ENCODE measurements at regions of chr6 and their contacts with region 1.

Region 1: GRCh38 chr6:20212392-20213217 is at the start of gene MBOAT1:
- DNase-seq: peak; percentile 60 to 76 (median 66)
- H3K4me3 ChIP-seq: peak within 1 kb of the TSS; percentile 59 to 89
- H3K4me3 Mint-ChIP-seq: peak within 1 kb of the TSS; percentile 97 to 99 (median 98)
- H3K27ac ChIP-seq: peak within 1 kb of the TSS; percentile 56
- H3K27ac Mint-ChIP-seq: peak within 1 kb of the TSS; percentile 93 to 96 (median 96)
- H3K4me1 ChIP-seq: peaks cover 43% of the 10 kb centered on the region
- H3K4me1 Mint-ChIP-seq: peaks cover 30 to 59% (median 37%) of the 10 kb centered on the region in 4 donors
- H3K27me3 ChIP-seq: no peaks in the 10 kb centered on the region
- H3K27me3 Mint-ChIP-seq: no peaks in the 10 kb centered on the region
- total RNA-seq, gene MBOAT1: 21.3 to 24.6 TPM

Region 2: GRCh38 chr6:20126789-20127653 is 85.6 kb before region 1 on chr6:
- CTCF ChIA-PET with region 1: interaction called, 10 read pairs
- POLR2A ChIA-PET with region 1: interaction called, 8 read pairs
- intact Hi-C with region 1: loop called (anchors 1 kb)
- DNase-seq: peak in 4 of 5 donors; percentile 27 to 45 (median 32)
- H3K4me3 ChIP-seq: no peak overlapping the region
- H3K4me3 Mint-ChIP-seq: no peak overlapping the region
- H3K27ac ChIP-seq: no peak overlapping the region
- H3K27ac Mint-ChIP-seq: peak overlapping the region in 3 of 7 donors; percentile 3 to 57 (median 38)
- H3K4me1 ChIP-seq: no peaks in the 10 kb centered on the region
- H3K4me1 Mint-ChIP-seq: peaks cover 1 to 10% (median 6%) of the 10 kb centered on the region in 4 donors
- H3K27me3 ChIP-seq: no peaks in the 10 kb centered on the region
- H3K27me3 Mint-ChIP-seq: no peaks in the 10 kb centered on the region

Region 3: DNA sequence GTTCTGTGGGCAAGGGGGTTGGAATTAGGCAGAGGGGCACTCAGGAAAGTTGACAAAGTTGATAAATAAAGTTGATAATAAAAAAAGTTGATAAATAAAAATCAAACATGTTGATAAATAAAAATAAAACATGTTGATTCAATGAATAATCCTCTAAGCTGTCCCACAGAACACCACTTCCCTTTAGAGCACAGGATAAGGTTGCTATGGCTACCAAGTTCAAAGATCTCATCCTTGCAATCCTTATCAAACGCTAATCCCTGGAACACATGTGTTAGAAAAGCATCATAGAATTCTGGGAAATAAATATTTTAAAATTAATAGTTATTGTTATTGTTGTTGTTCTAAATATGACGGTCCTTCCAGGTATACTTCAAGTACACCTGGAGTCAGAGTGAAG is 34.3 kb before region 1 on chr6:
- CTCF ChIA-PET with region 1: interaction called, 4 read pairs
- POLR2A ChIA-PET with region 1: interaction called, 3 read pairs
- intact Hi-C with region 1: loop called (anchors 5 kb)
- DNase-seq: no peak
- H3K4me3 ChIP-seq: no peak overlapping the region
- H3K4me3 Mint-ChIP-seq: no peak overlapping the region
- H3K27ac ChIP-seq: no peak overlapping the region
- H3K27ac Mint-ChIP-seq: no peak overlapping the region
- H3K4me1 ChIP-seq: peaks cover 16% of the 10 kb centered on the region
- H3K4me1 Mint-ChIP-seq: peaks cover 23 to 32% (median 25%) of the 10 kb centered on the region in 4 donors
- H3K27me3 ChIP-seq: no peaks in the 10 kb centered on the region
- H3K27me3 Mint-ChIP-seq: no peaks in the 10 kb centered on the region

Region 4: DNA sequence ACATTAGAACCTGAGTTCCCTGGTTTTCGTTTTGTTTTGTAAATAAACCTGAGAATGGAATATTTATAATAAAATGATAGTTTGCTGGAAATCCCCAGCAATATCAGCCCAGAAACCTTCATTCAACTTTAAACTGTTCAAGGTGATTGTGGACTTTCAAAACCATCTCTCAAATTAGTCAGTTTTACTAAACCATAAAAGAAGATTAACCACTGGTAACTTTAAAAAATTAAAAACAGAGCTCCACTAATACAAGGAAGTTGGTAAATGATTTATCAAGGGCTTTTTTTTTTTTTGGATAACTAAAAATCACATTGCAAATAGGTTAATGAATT is 10.3 kb before region 1 on chr6:
- CTCF ChIA-PET with region 1: interaction called, 15 read pairs
- POLR2A ChIA-PET with region 1: interaction called, 28 read pairs
- intact Hi-C with region 1: no loop called
- DNase-seq: no peak
- H3K4me3 ChIP-seq: no peak overlapping the region
- H3K4me3 Mint-ChIP-seq: no peak overlapping the region
- H3K27ac ChIP-seq: no peak overlapping the region
- H3K27ac Mint-ChIP-seq: no peak overlapping the region
- H3K4me1 ChIP-seq: peaks cover 58% of the 10 kb centered on the region
- H3K4me1 Mint-ChIP-seq: peaks cover 46 to 74% (median 55%) of the 10 kb centered on the region in 4 donors
- H3K27me3 ChIP-seq: no peaks in the 10 kb centered on the region
- H3K27me3 Mint-ChIP-seq: no peaks in the 10 kb centered on the region

Region 5: GRCh38 chr6:20291764-20292580 is 79.4 kb after region 1 on chr6:
- CTCF ChIA-PET with region 1: interaction called, 3 read pairs
- POLR2A ChIA-PET with region 1: interaction called, 3 read pairs
- intact Hi-C with region 1: loop called (anchors 5 kb)
- DNase-seq: peak; percentile 55 to 68 (median 61)
- H3K4me3 ChIP-seq: no peak overlapping the region
- H3K4me3 Mint-ChIP-seq: peak overlapping the region in 7 of 8 donors; percentile 4 to 65 (median 34)
- H3K27ac ChIP-seq: no peak overlapping the region
- H3K27ac Mint-ChIP-seq: peak overlapping the region in 4 of 7 donors; percentile 8 to 63 (median 47)
- H3K4me1 ChIP-seq: peaks cover 13% of the 10 kb centered on the region
- H3K4me1 Mint-ChIP-seq: peaks cover 8 to 29% (median 14%) of the 10 kb centered on the region in 4 donors
- H3K27me3 ChIP-seq: no peaks in the 10 kb centered on the region
- H3K27me3 Mint-ChIP-seq: no peaks in the 10 kb centered on the region

Region 6: GRCh38 chr6:20534295-20535262 is 322.0 kb after region 1 on chr6 and contains the start of gene CDKAL1:
- CTCF ChIA-PET with region 1: interaction called, 4 read pairs
- POLR2A ChIA-PET with region 1: interaction called, 8 read pairs
- intact Hi-C with region 1: loop called (anchors 2 kb)
- DNase-seq: peak; percentile 85 to 90 (median 86)
- H3K4me3 ChIP-seq: peak within 1 kb of the TSS; percentile 89 to 99
- H3K4me3 Mint-ChIP-seq: peak within 1 kb of the TSS; percentile 92 to 100 (median 99)
- H3K27ac ChIP-seq: peak within 1 kb of the TSS; percentile 72
- H3K27ac Mint-ChIP-seq: peak within 1 kb of the TSS; percentile 94 to 99 (median 99)
- H3K4me1 ChIP-seq: peaks cover 25% of the 10 kb centered on the region
- H3K4me1 Mint-ChIP-seq: peaks cover 22 to 52% (median 39%) of the 10 kb centered on the region in 4 donors
- H3K27me3 ChIP-seq: no peaks in the 10 kb centered on the region
- H3K27me3 Mint-ChIP-seq: no peaks in the 10 kb centered on the region
- total RNA-seq, gene CDKAL1: 22.3 to 22.7 TPM